ENCODE measurements at regions of chr5 and their contacts with region 1.

Region 1: DNA sequence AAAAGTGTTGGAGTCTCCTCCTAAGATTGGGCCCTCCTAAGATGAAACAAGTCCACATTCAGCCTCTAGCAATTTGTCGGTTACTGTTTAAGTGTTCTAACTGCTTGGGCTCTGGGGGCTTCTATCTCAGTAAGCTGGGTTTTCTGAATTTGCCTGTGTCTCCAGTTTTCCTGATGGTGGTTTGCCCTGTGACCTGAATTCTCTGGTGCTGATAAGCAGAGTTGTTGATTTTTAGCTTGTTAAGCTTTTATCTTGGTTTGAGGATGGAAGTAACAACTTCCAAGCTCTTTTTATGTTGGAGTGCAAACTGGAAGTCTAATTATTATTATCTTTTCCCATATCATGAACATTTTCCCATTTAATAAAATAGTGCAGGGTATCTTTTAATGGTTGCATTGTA is 30.9 kb downstream of the HSD17B4 start:
- DNase-seq: no peak
- ATAC-seq: no peak
- H3K4me3 Mint-ChIP-seq: no peak overlapping the region
- H3K27ac Mint-ChIP-seq: peak overlapping the region; percentile 74; the same call in 1 of the 2 replicates
- H3K4me1 Mint-ChIP-seq: peaks cover 67% of the 10 kb centered on the region
- H3K27me3 Mint-ChIP-seq: no peaks in the 10 kb centered on the region
- CTCF ChIP-seq: no peak

Region 2: GRCh38 chr5:119470851-119471451 is 12.2 kb before region 1 on chr5:
- CTCF ChIA-PET with region 1: interaction called, 11 read pairs
- POLR2A ChIA-PET with region 1: no interaction called
- DNase-seq: no peak
- ATAC-seq: peak; percentile 10
- H3K4me3 Mint-ChIP-seq: peak overlapping the region; percentile 33; the same call in 1 of the 2 replicates
- H3K27ac Mint-ChIP-seq: peak overlapping the region; percentile 48
- H3K4me1 Mint-ChIP-seq: peaks cover 52% of the 10 kb centered on the region
- H3K27me3 Mint-ChIP-seq: peaks cover 12% of the 10 kb centered on the region
- CTCF ChIP-seq: 0 out of 2 replicates have a peak, but pooled peaks have one; percentile 33

Measured in WTC11 (cell line).